Common myeloid progenitor, CD34-positive (primary cell): ENCODE measurements at regions of chr22 and their contacts with region 1.

Region 1: GRCh38 chr22:49970528-49971231 is 10.1 kb downstream of the PIM3 start:
- DNase-seq: peak; percentile 98 to 99 (median 99)
- H3K4me3 ChIP-seq: peak overlapping the region in 6 of 7 experiments; percentile 15 to 70 (median 50)
- H3K27ac ChIP-seq: peak overlapping the region in 1 of 2 experiments; percentile 34
- H3K4me1 ChIP-seq: peaks cover 0 to 53% (median 48%) of the 10 kb centered on the region in 4 experiments
- H3K27me3 ChIP-seq: peaks cover 0 to 11% (median 0%) of the 10 kb centered on the region in 5 experiments

Region 2: DNA sequence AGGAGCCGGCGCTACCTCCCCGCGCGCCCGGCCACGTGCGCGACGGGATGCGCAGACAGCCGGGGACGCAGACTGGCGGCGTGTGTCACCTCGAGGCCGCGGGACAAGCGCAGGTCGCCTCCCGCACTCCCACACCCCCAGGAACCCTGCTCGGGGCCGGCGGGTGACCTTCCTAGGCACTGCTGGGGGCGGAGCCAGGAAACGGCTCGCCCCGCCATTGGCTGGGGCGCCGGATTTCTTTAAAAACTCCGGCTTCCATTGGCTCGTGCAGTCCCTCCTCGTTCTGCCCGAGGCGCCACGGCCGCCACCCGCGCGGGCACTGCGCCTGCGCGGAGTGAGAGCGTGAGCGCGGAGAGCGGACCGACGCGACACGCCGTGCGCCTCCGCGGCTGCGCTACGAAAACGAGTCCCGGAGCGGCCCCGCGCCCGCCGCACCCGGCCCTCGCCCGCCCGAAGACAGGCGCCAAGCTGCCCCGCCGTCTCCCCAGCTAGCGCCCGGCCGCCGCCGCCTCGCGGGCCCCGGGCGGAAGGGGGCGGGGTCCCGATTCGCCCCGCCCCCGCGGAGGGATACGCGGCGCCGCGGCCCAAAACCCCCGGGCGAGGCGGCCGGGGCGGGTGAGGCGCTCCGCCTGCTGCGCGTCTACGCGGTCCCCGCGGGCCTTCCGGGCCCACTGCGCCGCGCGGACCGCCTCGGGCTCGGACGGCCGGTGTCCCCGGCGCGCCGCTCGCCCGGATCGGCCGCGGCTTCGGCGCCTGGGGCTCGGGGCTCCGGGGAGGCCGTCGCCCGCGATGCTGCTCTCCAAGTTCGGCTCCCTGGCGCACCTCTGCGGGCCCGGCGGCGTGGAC is 10.3 kb before region 1 on chr22 and contains the start of gene PIM3:
- CTCF ChIA-PET with region 1: no interaction called
- POLR2A ChIA-PET with region 1: interaction called, 25 read pairs
- DNase-seq: peak; percentile 95 to 97 (median 97)
- H3K4me3 ChIP-seq: peak within 1 kb of the TSS; percentile 77 to 95 (median 89)
- H3K27ac ChIP-seq: peak within 1 kb of the TSS; percentile 54 to 78
- H3K4me1 ChIP-seq: peaks cover 0 to 43% (median 37%) of the 10 kb centered on the region in 4 experiments
- H3K27me3 ChIP-seq: no peaks in the 10 kb centered on the region

Region 3: DNA sequence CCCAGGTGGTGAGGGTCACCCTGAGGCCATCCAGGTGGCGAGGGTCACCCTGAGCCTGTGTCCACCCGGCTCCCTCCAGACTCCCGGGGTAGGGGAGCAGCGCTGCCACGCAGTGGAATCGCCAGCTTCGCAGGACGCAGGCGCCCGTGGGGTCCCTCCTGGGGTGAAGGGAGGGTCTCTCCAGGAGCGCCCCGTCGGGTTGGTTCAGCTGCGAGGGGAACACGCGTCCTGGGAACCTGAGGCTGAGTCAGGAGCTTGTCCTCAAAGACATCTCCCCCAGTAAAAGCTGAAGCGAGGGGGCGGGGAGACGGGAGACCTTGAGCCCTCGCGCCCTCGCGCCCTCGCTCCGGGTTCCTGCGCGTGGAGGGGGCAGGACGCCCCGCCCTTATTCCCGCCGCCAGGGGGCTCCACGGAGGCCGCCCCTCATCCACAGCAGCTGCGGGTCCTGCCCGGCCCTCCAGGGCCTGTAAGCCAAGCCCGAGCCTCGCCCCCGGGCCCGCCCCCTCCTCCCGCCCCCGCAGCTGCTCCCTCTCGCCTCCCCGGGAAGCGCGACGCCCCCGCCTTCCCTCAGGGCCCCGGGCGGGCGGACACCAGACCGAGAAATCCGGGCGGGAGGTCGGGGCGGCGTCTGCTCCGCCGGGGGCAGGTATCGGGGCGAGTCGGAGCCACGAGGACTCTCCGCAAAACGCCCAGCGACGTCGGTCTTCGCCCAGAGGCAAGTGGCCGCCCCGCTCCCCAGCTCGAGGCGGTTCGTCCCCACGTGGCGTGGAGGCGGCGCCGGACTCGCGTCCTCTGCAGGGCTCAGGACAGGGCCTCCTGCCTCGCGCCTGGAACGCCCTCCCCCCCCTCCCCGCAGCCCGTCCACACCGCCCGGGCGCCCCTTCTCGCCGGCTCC is 12.7 kb after region 1 on chr22:
- CTCF ChIA-PET with region 1: interaction called, 13 read pairs
- POLR2A ChIA-PET with region 1: interaction called, 3 read pairs
- DNase-seq: peak; percentile 57 to 76 (median 75)
- H3K4me3 ChIP-seq: peak overlapping the region in 1 of 7 experiments; percentile 11
- H3K27ac ChIP-seq: no peak overlapping the region
- H3K4me1 ChIP-seq: peaks cover 0 to 10% (median 4%) of the 10 kb centered on the region in 4 experiments
- H3K27me3 ChIP-seq: peaks cover 0 to 21% (median 7%) of the 10 kb centered on the region in 5 experiments

Region 4: DNA sequence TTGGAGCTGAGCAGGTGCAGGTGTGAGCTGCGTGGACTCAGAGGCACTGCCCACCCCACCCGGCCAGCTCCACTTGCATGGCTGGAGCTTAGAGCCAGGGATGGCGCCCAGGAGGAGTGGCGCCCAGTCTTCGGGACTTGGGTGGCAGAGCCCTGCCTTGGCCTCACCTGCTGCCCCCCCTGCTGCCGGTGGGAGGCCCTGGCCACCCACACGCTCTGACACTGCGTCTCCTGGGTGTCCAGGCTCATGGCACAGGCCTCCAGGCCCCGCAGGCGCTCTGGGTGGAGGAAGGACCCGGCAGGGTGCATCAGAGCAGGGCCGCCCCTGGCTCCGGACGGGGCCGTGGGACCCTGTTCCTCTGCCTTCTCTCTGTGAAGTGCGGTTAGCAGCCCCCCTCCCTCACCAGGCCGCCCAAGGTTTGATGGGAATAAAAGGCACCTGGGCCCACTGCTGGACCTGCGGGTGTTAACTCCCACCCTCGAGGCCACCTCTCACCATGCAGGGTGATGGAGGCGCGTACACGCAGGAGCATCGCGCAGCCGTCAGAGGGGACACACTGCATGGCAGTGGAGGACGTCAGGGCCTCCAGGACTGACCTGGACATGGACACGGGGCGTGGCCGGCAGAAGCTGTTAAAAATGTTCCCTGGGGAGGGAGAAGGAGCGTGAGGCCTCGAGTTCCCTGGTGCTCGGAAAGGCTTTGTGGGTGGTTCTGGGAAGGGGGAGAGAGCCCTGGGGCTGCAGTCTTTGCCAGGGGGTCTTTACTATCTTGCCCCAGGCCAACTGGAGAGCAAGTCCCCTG is 30.1 kb after region 1 on chr22:
- CTCF ChIA-PET with region 1: no interaction called
- POLR2A ChIA-PET with region 1: no interaction called
- DNase-seq: no peak
- H3K4me3 ChIP-seq: no peak overlapping the region
- H3K27ac ChIP-seq: no peak overlapping the region
- H3K4me1 ChIP-seq: peaks cover 0 to 12% (median 10%) of the 10 kb centered on the region in 4 experiments
- H3K27me3 ChIP-seq: peaks cover 0 to 21% (median 5%) of the 10 kb centered on the region in 5 experiments